ENCODE measurements at regions of chr2 and their contacts with region 1.

Region 1: GRCh38 chr2:46364797-46365457 is 67.7 kb downstream of the EPAS1 start:
- DNase-seq: peak; percentile 57
- H3K4me3 ChIP-seq: no peak overlapping the region
- H3K27ac ChIP-seq: no peak overlapping the region
- H3K4me1 ChIP-seq: no peaks in the 10 kb centered on the region
- H3K27me3 ChIP-seq: no peaks in the 10 kb centered on the region
- CTCF ChIP-seq: peak; percentile 87

Region 2: DNA sequence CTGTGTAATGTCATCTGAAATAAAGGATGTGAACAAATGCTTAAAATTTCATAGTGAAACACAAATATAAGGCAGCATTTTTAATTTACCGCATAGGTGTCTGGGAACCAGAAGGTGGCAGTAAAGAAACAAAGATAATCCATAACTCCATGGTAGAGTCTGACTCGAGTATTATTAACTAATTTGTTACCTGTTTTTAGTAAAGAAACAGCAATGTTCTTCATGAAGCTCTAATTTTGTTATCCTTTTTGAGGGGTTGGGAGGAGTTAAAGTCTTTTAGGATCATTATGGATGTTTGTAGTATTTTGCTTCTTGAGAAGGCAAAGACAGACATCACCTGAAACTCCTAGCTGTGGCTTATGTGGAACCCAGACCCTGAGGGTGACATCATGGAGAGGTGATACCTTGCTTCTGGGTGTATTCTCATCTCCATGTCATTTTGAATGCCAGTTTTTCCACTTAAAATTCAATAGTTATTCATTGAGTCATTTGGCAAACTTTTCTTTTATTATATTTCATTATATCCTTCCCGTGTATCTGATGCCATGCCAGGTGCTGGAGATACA is 353.9 kb before region 1 on chr2:
- intact Hi-C with region 1: loop called (anchors 5 kb)
- DNase-seq: no peak
- H3K4me3 ChIP-seq: no peak overlapping the region
- H3K27ac ChIP-seq: no peak overlapping the region
- H3K4me1 ChIP-seq: no peaks in the 10 kb centered on the region
- H3K27me3 ChIP-seq: no peaks in the 10 kb centered on the region
- CTCF ChIP-seq: peak; percentile 57

Region 3: DNA sequence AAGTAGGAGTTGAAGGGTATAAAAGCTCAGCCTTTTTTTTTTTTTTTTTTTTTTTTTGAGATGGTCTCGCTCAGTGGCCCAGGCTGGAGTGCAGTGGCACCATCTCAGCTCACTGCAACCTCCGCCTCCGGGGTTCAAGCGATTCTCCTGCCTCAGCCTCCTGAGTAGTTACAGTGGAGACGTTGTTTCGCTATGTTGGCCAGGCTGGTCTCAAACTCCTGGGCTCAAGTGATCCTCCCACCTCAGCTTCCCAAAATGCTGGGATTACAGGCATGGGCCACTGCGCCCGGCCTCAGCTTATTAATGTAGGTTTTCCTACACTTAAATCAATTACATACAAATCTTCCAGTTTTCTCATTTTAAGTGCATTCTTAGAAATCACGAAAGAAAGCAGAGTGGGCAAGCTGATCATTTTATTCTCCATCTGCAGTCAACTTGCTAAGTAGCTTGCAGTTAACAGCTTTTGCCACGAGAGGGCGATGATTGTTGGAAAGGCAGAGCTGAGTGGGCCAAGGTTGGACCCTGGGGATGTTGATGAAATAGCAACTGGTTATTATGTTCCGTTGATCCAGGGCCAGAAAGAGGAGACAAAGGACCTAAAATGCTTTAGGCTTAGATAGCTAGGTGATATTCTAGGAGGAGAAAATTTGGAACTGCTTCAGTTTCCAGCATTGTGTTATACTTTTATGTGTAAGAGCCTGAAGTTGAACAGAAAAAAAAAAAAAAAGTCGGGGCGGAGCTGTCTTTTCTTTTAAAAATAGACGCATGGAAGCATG is 302.1 kb before region 1 on chr2:
- intact Hi-C with region 1: loop called (anchors 5 kb)
- DNase-seq: peak; percentile 81
- H3K4me3 ChIP-seq: no peak overlapping the region
- H3K27ac ChIP-seq: no peak overlapping the region
- H3K4me1 ChIP-seq: no peaks in the 10 kb centered on the region
- H3K27me3 ChIP-seq: no peaks in the 10 kb centered on the region
- CTCF ChIP-seq: peak; percentile 81

Region 4: DNA sequence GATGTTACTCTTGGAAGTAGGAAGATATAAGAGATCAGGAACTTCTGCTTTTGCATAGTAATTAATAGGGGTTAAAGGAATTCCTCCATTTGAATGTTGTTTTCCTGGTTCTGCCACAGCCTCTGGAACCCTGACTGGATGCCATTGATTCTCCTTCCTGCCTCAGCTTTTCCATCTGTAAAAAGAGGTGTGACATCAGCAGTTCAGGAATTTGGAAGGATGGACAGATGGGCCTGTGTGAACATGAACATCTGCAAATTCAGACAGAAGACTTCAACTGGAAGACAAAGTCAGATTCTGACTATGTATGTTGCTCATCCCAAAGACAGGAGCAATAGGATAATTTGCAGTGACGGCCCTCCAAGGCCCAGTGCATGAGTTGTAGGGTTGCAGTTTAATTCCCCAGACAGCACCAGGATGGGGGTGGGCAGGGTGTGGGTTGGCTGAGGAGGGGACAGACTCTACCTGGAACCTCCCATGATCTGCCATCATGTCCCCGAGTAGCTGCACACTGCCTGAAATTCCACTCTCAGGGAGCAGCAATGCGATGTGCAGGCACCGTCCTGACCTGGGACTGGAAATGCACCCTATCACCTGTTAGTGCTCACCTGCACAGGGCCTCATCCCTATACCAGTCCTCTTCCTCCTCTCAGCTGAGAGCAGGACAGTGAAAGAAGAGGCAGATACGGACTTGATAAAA is 166.6 kb before region 1 on chr2:
- intact Hi-C with region 1: no loop called
- DNase-seq: no peak
- H3K4me3 ChIP-seq: no peak overlapping the region
- H3K27ac ChIP-seq: no peak overlapping the region
- H3K4me1 ChIP-seq: no peaks in the 10 kb centered on the region
- H3K27me3 ChIP-seq: no peaks in the 10 kb centered on the region
- CTCF ChIP-seq: no peak

Region 5: DNA sequence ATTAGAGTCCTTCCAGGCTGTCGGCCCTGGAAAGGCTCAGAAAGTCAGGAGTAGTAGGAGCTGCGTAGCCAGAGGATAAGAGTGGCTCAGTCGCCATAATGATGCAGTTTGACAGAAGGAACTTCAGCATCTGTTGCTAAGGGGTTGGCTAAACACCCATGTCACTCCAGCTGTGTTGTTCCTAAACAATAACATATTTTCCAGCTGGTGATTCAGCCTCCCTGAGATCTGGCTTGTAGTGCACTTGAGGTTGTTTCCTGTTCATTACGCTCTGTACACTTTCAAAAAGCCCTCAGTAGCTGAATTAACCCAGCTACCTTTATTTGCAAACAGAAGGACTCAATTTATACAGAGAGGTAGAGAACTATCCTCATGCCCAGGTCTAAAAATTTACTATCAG is 107.5 kb before region 1 on chr2:
- intact Hi-C with region 1: no loop called
- DNase-seq: no peak
- H3K4me3 ChIP-seq: no peak overlapping the region
- H3K27ac ChIP-seq: no peak overlapping the region
- H3K4me1 ChIP-seq: no peaks in the 10 kb centered on the region
- H3K27me3 ChIP-seq: no peaks in the 10 kb centered on the region
- CTCF ChIP-seq: no peak